Heart left ventricle (tissue), 16 donors: ENCODE measurements at regions of chr16 and their contacts with region 1.

Region 1: DNA sequence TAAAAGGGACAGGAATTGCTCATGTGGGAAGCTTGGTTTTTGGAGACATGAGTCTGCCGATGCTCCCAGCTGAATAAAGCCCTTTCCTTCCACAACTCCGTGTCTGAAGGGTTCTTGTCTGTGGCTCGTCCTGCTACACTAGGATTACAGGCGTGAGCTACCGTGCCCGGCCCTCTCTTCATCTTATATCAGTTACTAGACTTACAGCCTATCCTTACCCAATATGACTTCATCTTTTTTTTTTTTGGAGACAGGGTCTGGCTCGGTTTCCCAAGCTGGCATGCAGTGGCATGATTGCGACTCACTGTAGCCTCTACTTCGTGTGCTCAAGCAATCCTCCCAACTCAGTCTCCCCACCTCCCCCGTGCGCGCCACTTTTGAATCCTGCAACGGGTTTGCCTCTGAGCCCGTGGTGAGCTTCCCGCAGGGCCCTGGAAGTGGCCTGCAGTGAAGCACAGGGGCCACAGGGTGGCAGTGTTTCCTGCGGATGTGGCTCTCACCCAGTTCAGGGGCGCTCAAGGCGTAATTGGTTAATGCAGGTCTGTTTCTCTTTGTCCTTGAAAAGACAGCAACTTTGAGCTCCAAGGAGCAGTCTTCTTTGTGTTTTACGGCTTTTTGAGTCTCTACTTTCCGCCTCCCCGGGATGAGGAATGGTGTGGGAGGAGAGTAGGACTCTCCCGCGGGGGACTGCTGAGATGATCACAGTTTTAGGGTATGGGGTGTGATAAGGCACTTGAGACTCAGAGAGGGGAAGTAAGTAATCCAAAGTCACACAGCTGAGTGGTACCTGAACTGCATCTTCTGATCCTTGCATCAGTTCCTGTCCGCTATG is 22.7 kb upstream of the GPRC5B start:
- DNase-seq: peak; percentile 36 to 76 (median 52)
- ATAC-seq: peak in 3 of 4 donors; percentile 77 to 91 (median 91)
- H3K4me3 ChIP-seq: peak overlapping the region in 2 of 12 donors; percentile 6 to 21
- H3K27ac ChIP-seq: no peak overlapping the region
- H3K4me1 ChIP-seq: peaks cover 0 to 6% (median 0%) of the 10 kb centered on the region in 12 donors
- H3K27me3 ChIP-seq: peaks cover 0 to 13% (median 5%) of the 10 kb centered on the region in 9 donors
- CTCF ChIP-seq: peak; percentile 89 to 97 (median 94)
- POLR2A ChIP-seq: no peak

Region 2: GRCh38 chr16:19967561-19968359 is 60.4 kb after region 1 on chr16:
- intact Hi-C with region 1: no loop called
- DNase-seq: no peak
- ATAC-seq: no peak
- H3K4me3 ChIP-seq: no peak overlapping the region
- H3K27ac ChIP-seq: no peak overlapping the region
- H3K4me1 ChIP-seq: no peaks in the 10 kb centered on the region
- H3K27me3 ChIP-seq: peaks cover 0 to 22% (median 0%) of the 10 kb centered on the region in 9 donors
- CTCF ChIP-seq: no peak
- POLR2A ChIP-seq: no peak

Region 3: DNA sequence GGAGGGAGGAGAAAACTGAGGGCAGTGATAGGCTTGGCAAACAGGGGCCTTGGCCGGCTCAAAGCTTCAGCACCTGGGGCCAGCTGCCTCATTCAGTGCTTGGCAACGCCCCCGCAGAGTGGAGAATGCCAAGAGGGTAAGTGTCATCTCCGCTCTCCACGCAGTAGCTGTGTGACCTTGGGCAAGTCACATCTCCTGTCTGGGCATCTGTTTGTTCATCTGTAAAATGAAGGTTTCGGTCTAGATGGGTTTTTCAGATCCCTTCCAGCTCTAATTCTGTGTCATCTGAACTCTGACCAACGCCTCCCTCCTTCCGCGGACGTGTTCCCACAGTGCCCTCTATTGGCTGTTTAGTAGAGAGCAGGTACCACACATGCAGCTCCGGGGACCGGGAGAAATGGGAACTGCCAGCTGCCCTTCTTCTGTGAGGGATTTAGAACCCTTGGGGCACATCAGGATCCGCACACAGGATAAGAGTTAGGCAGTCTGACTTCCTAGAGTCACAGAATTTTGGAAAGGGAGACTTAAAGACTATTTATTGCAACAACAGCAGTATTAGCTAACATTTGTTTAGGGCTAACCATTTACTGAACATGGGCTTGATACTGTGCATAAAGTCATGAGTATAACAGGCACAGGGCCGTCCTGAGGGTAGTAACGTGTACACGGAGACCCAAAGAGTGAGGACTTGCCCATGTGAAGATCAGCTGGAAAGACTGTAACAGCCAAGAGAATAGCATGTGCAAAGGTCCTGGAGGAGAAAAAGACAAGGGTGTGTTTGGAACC is 393.1 kb after region 1 on chr16:
- intact Hi-C with region 1: loop called in 9 of 10 experiments (anchors 1 to 5 kb)
- DNase-seq: peak in 1 of 5 donors; percentile 16
- ATAC-seq: peak in 2 of 4 donors; percentile 54 to 79
- H3K4me3 ChIP-seq: no peak overlapping the region
- H3K27ac ChIP-seq: no peak overlapping the region
- H3K4me1 ChIP-seq: no peaks in the 10 kb centered on the region
- H3K27me3 ChIP-seq: peaks cover 0 to 47% (median 0%) of the 10 kb centered on the region in 9 donors
- CTCF ChIP-seq: peak; percentile 23 to 69 (median 56)
- POLR2A ChIP-seq: no peak

Region 4: GRCh38 chr16:20383106-20384029 is 476.0 kb after region 1 on chr16:
- intact Hi-C with region 1: loop called (anchors 1 to 5 kb)
- DNase-seq: peak in 3 of 5 donors; percentile 35 to 48 (median 43)
- ATAC-seq: peak in 3 of 4 donors; percentile 69 to 80 (median 76)
- H3K4me3 ChIP-seq: no peak overlapping the region
- H3K27ac ChIP-seq: no peak overlapping the region
- H3K4me1 ChIP-seq: peaks cover 0 to 5% (median 0%) of the 10 kb centered on the region in 12 donors
- H3K27me3 ChIP-seq: peaks cover 0 to 14% (median 0%) of the 10 kb centered on the region in 9 donors
- CTCF ChIP-seq: peak; percentile 71 to 83 (median 74)
- POLR2A ChIP-seq: no peak